Dendritic cell treated with granulocyte-macrophage colony-stimulating factor and Interleukin-4, amounts not matched to agents 40 ng/mL and 50 ng/mL, for 4 days (primary cell): ENCODE measurements at regions of chr6 and their contacts with region 1.

Region 1: GRCh38 chr6:163667372-163668060 is 253.0 kb downstream of the QKI start:
- H3K4me3 Mint-ChIP-seq: peak overlapping the region; percentile 13
- H3K27ac Mint-ChIP-seq: peak overlapping the region; percentile 78
- H3K4me1 Mint-ChIP-seq: peaks cover 26% of the 10 kb centered on the region
- H3K27me3 Mint-ChIP-seq: peaks cover 1% of the 10 kb centered on the region

Region 2: DNA sequence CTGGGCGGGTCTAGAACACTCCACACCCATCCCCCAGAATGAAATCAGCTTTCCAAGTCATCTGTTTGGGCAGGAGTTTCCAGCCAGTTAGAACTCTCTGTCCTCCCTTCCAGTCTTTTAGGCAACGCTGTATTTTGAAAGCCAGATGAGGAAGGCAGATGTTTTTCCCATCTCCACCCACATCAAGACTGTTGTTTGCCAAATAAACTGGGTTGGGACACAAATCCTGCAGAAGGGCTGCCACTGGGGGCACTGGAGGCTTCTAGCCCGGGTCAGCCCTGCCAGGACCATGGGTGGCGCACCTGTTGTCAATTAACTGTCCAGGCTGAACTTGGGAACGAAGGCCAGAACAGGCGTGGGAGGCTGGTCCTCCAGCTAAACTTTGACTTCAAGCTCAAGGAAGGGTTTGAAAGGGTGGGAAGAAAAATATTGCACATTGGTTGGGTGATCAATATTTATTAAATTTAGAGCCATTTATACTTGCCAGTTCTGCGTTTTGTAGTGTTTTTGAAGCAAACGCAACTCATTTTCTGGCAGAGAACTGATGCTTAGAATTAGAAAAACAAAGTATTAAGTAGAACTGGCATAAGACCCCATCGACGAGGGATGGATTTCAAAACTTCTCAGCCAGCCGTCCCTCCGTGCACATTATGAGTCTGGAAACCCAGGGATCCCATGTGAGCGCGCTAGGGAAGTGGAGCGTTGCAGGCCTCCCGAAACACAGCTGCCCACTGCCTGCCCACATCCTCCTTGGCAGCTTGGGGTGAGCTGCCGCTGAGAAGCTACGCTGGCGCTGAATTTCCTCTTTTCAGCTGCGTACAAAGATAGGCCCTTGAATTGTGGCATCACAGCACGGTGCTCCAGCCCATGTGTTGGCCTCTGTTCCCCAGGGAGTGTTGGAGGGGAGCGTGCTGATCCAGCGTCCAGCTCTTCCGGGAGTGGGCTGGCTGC is 44.4 kb after region 1 on chr6:
- intact Hi-C with region 1: loop called (anchors 5 kb)
- H3K4me3 Mint-ChIP-seq: peak overlapping the region; percentile 37
- H3K27ac Mint-ChIP-seq: peak overlapping the region; percentile 95
- H3K4me1 Mint-ChIP-seq: peaks cover 96% of the 10 kb centered on the region
- H3K27me3 Mint-ChIP-seq: no peaks in the 10 kb centered on the region

Region 3: GRCh38 chr6:163756079-163756478 is 88.6 kb after region 1 on chr6:
- intact Hi-C with region 1: loop called (anchors 5 kb)
- H3K4me3 Mint-ChIP-seq: peak overlapping the region; percentile 40
- H3K27ac Mint-ChIP-seq: peak overlapping the region; percentile 88
- H3K4me1 Mint-ChIP-seq: peaks cover 61% of the 10 kb centered on the region
- H3K27me3 Mint-ChIP-seq: peaks cover 7% of the 10 kb centered on the region